PC-3 (cell line): ENCODE measurements at regions of chrX and their contacts with region 1.

Region 1: DNA sequence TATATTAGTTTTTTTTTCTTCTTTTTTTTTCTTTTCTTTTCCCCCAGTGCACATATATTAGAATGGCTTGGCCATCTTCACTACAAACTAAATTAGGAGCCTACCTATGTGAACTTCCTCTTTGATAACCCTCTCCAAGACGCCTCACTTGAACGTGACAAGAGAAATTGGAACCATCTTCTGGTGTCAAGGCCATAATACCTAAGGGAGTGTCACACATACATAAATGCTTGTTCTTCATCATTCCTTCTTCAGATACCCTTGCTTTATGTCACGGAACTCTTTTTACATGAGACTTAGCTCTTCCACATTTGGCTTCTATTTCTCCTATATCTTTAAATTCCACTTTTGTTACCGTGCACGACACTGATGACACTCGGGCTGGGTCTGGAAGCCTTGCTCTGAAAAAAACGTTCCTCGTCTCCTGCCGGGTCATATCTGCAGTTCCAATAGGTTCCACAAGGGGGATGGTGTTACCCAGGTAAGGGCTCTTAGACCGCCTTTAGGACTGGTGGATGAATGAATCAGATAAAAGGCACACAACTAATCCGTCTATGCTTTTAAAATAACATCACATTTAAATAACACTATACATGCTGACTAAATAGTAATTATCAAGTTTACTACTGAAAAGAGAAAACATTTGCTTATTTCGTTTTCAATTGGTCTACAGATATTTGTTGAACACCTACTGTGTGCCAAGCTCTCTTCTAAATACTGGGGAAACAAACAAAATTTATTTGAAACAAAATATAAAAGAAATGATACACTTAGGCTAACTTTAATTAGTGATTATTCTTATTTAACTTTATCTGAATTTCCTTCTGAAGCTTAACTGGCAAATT is 19.9 kb downstream of the DGAT2L6 start:
- DNase-seq: peak; percentile 88
- ATAC-seq: peak; percentile 86
- H3K4me3 ChIP-seq: 0 out of 2 replicates have a peak overlapping the region, but pooled peaks have one; percentile 3
- H3K27ac ChIP-seq: no peak overlapping the region
- H3K4me1 ChIP-seq: no peaks in the 10 kb centered on the region
- H3K27me3 ChIP-seq: no peaks in the 10 kb centered on the region
- CTCF ChIP-seq: peak; percentile 82

Region 2: DNA sequence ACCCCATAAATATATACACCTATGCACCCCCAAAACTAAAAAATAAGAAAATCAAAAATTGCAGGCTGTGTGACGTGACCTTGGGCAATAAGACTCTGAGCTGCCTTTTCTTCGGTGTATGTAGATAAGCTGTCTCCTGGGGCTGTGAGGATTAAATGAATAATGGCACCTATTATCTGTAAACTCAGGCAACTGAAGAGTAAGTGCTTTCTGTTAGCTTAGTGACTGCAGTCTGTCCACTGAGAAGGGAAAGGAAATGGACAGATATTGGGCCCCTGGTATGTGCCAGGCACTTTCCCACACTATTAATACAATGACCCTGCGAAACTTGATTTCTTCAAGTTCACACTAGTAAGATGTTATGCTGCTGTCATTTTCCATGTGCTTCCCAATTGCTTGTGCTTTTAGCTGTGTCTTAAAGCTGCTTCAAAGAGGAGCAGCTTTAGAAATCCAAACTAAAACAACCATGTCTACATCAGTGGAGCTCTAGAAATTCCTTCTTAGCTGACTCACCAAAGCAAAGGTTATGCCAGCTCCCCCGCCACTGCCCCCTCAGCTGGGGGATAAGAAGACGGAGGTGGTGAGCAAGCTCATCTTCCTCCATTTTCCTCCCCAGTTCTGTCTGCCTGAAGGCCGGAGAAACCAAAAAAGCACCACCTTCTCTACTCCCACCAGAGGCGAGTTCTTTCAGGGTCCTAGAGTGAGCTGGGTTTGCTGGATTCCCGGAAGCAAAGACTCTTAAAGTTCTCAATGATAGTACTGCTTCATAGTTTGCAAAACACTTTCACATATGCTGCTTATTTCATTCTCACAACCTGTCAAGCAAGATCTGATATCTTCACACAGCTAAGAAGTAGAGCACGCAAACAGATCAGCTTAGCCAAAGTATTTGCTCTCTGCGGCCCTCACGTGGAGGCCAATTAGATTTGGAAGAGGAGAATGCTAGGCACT is 28.7 kb before region 1 on chrX:
- CTCF ChIA-PET with region 1: no interaction called
- POLR2A ChIA-PET with region 1: no interaction called
- intact Hi-C with region 1: loop called (anchors 2 kb)
- DNase-seq: peak; percentile 75
- ATAC-seq: peak; percentile 67
- H3K4me3 ChIP-seq: peak overlapping the region; percentile 44; the same call in 1 of the 2 replicates
- H3K27ac ChIP-seq: peak overlapping the region; percentile 75
- H3K4me1 ChIP-seq: peaks cover 41% of the 10 kb centered on the region
- H3K27me3 ChIP-seq: no peaks in the 10 kb centered on the region
- CTCF ChIP-seq: no peak

Region 3: GRCh38 chrX:70262952-70263567 is 65.9 kb after region 1 on chrX:
- CTCF ChIA-PET with region 1: no interaction called
- POLR2A ChIA-PET with region 1: no interaction called
- intact Hi-C with region 1: loop called (anchors 1 kb)
- DNase-seq: peak; percentile 80
- ATAC-seq: peak; percentile 92
- H3K4me3 ChIP-seq: no peak overlapping the region
- H3K27ac ChIP-seq: no peak overlapping the region
- H3K4me1 ChIP-seq: no peaks in the 10 kb centered on the region
- H3K27me3 ChIP-seq: no peaks in the 10 kb centered on the region
- CTCF ChIP-seq: peak; percentile 80

Region 4: GRCh38 chrX:70301716-70302115 is 104.5 kb after region 1 on chrX:
- CTCF ChIA-PET with region 1: no interaction called
- POLR2A ChIA-PET with region 1: no interaction called
- intact Hi-C with region 1: no loop called
- DNase-seq: no peak
- ATAC-seq: no peak
- H3K4me3 ChIP-seq: no peak overlapping the region
- H3K27ac ChIP-seq: no peak overlapping the region
- H3K4me1 ChIP-seq: no peaks in the 10 kb centered on the region
- H3K27me3 ChIP-seq: no peaks in the 10 kb centered on the region
- CTCF ChIP-seq: no peak